ENCODE measurements at regions of chr13 and their contacts with region 1.

Region 1: GRCh38 chr13:41434831-41435520 is 22.4 kb upstream of the RGCC start:
- DNase-seq: no peak
- ATAC-seq: no peak
- H3K4me3 ChIP-seq: no peak overlapping the region
- H3K27ac ChIP-seq: no peak overlapping the region
- H3K4me1 ChIP-seq: no peaks in the 10 kb centered on the region
- H3K27me3 ChIP-seq: no peaks in the 10 kb centered on the region
- CTCF ChIP-seq: no peak

Region 2: GRCh38 chr13:41310963-41311606 is 123.9 kb before region 1 on chr13 and contains the start of gene NAA16:
- CTCF ChIA-PET with region 1: no interaction called
- POLR2A ChIA-PET with region 1: no interaction called
- intact Hi-C with region 1: no loop called
- DNase-seq: peak; percentile 86
- ATAC-seq: peak; percentile 77
- H3K4me3 ChIP-seq: peak within 1 kb of the TSS; percentile 89
- H3K27ac ChIP-seq: peak within 1 kb of the TSS; percentile 68
- H3K4me1 ChIP-seq: peaks cover 18% of the 10 kb centered on the region; the same call in 1 of the 2 replicates
- H3K27me3 ChIP-seq: no peaks in the 10 kb centered on the region
- CTCF ChIP-seq: no peak
- total RNA-seq, gene NAA16: 9.8 and 11.3 TPM in 2 replicates

Region 3: DNA sequence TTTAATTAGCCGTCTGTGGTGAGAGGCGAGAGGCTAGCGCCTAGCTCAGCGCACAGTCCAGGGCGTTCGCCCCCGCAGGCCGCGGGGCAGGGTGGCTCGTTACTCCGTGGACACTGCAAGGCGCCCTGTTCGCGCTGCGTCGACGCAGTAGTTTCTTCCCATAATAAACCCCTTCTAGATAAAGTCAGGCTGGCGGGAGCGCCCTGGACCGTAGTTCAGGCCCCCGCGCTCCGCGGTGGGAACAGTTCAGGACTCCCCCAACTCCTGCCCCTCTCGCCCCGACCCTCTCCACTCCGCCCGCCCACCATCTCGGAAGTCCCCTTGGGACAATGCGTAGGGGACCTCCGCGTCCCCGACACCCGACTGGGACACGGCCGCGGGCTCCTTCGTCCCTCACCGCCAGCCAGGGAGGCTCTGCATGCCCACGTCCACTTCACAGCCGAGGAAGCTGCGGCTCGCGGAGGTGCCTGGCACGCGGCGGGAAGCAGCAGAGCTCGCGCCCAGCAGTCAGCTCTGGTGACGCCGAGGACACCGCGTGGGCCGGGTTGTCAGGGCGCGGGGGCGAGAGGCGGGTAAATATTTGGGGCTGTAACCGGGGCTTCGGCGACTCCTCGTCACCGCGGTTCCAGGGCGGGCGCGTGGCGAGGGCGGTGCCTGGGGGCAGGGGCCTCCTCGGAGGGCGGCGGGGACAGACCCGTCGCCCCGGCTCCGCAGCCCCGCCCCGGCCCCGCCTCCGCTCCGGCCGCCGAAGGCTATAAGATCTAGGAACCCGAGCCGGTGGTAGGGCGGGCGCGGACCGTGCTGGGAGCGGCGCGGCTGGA is 22.0 kb after region 1 on chr13 and contains the start of gene RGCC:
- CTCF ChIA-PET with region 1: no interaction called
- POLR2A ChIA-PET with region 1: interaction called, 30 read pairs
- intact Hi-C with region 1: no loop called
- DNase-seq: peak; percentile 56
- ATAC-seq: peak; percentile 73
- H3K4me3 ChIP-seq: peak within 1 kb of the TSS; percentile 78
- H3K27ac ChIP-seq: no peak within 1 kb of the TSS
- H3K4me1 ChIP-seq: peaks cover 4% of the 10 kb centered on the region; the same call in 1 of the 2 replicates
- H3K27me3 ChIP-seq: no peaks in the 10 kb centered on the region
- CTCF ChIP-seq: no peak
- total RNA-seq, gene RGCC: 2.4 and 2.6 TPM in 2 replicates